ENCODE measurements at regions of chr11 and their contacts with region 1.

Region 1: DNA sequence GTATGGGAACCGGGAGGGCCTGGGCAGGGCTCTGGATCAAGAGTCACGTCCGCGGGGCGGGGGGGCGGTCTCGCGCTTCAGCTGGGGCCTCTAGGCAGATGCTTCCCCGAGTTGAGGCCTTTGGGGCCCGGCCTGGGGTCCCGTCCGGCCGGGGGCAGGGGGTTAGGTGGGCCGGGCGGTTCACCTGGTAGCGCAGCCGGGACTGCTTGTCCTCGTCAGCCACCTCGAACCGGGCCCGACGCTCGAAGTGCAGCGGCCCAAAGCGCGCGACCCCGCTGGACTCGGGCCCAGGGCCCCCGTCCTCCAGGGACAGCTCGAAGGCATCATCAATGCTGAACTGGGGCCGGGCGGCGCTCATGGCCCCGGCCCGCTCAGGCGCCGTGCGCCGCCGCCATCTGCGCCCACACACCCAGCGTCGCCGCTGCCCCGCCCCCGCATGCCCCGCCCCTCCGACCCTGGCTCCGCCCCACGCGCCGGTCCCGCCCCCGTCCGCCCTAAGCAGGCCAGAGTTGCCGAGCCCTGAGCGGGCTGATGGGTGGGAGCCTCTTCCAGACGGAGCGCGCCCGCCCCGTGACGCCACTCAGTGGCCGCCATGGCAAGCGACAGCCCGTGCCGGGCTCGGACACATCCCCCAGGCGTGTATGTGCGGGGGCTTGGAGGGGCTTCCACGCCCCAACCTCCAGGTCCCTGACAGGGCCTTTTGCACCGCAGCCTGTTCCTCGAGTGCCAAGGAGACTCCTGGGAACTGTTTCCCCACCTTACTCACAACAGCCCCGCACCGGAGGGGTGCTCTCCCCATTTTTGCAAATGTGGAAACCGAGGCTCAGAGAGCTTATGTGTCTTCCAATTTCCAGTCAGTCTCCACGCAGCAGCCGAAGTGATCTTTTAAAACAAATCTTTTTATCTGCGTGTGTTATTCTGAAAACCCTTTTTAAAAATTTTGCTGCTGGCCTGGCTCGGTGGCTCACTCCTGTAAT is at the start of gene TMEM134:
- DNase-seq: peak; percentile 93 to 97
- ATAC-seq: peak; percentile 93 to 97 (median 96)
- H3K4me3 ChIP-seq: peak within 1 kb of the TSS; percentile 98
- H3K27ac ChIP-seq: peak within 1 kb of the TSS; percentile 85
- H3K4me1 ChIP-seq: peaks cover 13% of the 10 kb centered on the region
- H3K27me3 ChIP-seq: no peaks in the 10 kb centered on the region
- CTCF ChIP-seq: peak; percentile 47
- total RNA-seq, gene TMEM134: 57.1 to 83.2 (median 66.2) TPM

Region 2: GRCh38 chr11:67401495-67402191 is 67.5 kb before region 1 on chr11 and contains the start of gene PPP1CA:
- intact Hi-C with region 1: loop called (anchors 5 kb)
- DNase-seq: peak; percentile 91 to 96
- ATAC-seq: peak; percentile 89 to 92 (median 92)
- H3K4me3 ChIP-seq: peak within 1 kb of the TSS; percentile 99
- H3K27ac ChIP-seq: peak within 1 kb of the TSS; percentile 95
- H3K4me1 ChIP-seq: peaks cover 32% of the 10 kb centered on the region
- H3K27me3 ChIP-seq: no peaks in the 10 kb centered on the region
- CTCF ChIP-seq: peak; percentile 63
- total RNA-seq, gene PPP1CA: 72.6 to 113 (median 86.6) TPM

Region 3: GRCh38 chr11:67417425-67417824 is 51.7 kb before region 1 on chr11:
- intact Hi-C with region 1: no loop called
- DNase-seq: no peak
- ATAC-seq: no peak
- H3K4me3 ChIP-seq: no peak overlapping the region
- H3K27ac ChIP-seq: peak overlapping the region; percentile 95
- H3K4me1 ChIP-seq: peaks cover 47% of the 10 kb centered on the region
- H3K27me3 ChIP-seq: peaks cover 0 to 2% (median 0%) of the 10 kb centered on the region in 3 donors
- CTCF ChIP-seq: no peak

Region 4: DNA sequence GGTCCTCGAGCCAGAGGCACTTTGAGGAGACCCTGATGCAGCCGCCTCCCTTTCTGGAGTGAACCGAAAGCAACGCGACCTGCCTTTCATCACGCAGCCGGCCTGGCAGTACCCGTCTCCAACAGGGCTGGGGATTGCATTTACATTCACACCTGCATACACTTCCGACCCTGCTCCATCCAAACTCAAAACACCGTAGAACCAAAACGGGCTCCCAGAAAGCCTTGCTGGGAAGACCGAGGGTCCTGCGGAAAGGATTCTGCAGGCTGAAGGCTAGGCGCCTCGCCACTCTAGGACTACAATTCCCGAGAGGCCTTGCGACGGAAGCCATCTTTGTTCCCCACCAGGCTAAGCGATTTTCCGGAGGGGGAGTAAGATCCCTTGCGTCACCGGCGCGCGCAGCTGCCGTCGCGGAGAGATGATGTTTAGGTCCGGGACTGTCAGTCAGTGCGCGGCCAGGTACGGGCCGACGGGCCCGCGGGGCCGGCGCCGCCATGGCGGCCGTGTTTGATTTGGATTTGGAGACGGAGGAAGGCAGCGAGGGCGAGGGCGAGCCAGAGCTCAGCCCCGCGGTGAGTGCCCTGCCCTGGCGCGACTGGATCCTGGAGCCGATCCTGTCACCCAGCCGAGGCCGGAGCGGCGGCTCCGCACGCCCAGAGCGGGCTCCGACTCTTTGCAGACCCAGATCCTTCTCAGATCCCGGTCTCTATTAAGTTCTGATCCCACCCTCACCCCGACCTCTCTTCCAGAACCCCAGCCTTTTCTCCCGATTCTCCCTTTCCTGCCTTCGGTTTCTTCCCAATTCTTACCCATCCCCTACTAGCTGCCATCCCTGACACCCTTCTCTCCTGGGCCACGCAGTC is 40.8 kb before region 1 on chr11 and contains the start of gene RPS6KB2:
- intact Hi-C with region 1: loop called (anchors 5 kb)
- DNase-seq: peak; percentile 99
- ATAC-seq: peak; percentile 93 to 97 (median 95)
- H3K4me3 ChIP-seq: peak within 1 kb of the TSS; percentile 96
- H3K27ac ChIP-seq: peak within 1 kb of the TSS; percentile 92
- H3K4me1 ChIP-seq: peaks cover 25% of the 10 kb centered on the region
- H3K27me3 ChIP-seq: no peaks in the 10 kb centered on the region
- CTCF ChIP-seq: no peak
- total RNA-seq, gene RPS6KB2: 23.1 to 34.3 (median 26.8) TPM

Measured in psoas muscle (tissue), 8 donors.